ENCODE measurements at regions of chr19 and their contacts with region 1.

Region 1: GRCh38 chr19:40603389-40604135 is 2.4 kb downstream of the LTBP4 start:
- DNase-seq: peak; percentile 88
- ATAC-seq: peak; percentile 86
- H3K4me3 ChIP-seq: peak overlapping the region; percentile 56
- H3K27ac ChIP-seq: no peak overlapping the region
- H3K4me1 ChIP-seq: peaks cover 19% of the 10 kb centered on the region
- H3K27me3 ChIP-seq: peaks cover 8% of the 10 kb centered on the region in 2 experiments
- CTCF ChIP-seq: no peak
- EP300 ChIP-seq: no peak
- POLR2A ChIP-seq: peak; percentile 37; the same call in 1 of the 2 replicates
- RAD21 ChIP-seq: no peak

Region 2: GRCh38 chr19:40190891-40191835 is 412.4 kb before region 1 on chr19 and contains the start of gene MAP3K10:
- CTCF ChIA-PET with region 1: no interaction called
- POLR2A ChIA-PET with region 1: no interaction called
- RAD21 ChIA-PET with region 1: no interaction called
- SMC1A ChIA-PET with region 1: no interaction called
- in situ Hi-C with region 1: no loop called
- intact Hi-C with region 1: no loop called
- DNase-seq: peak; percentile 12
- ATAC-seq: peak; percentile 93
- H3K4me3 ChIP-seq: peak within 1 kb of the TSS; percentile 97
- H3K27ac ChIP-seq: peak within 1 kb of the TSS; percentile 89
- H3K4me1 ChIP-seq: peaks cover 10% of the 10 kb centered on the region
- H3K27me3 ChIP-seq: no peaks in the 10 kb centered on the region
- CTCF ChIP-seq: no peak
- EP300 ChIP-seq: no peak
- POLR2A ChIP-seq: peak; percentile 75
- RAD21 ChIP-seq: no peak
- polyA plus RNA-seq, gene MAP3K10: 0.11 to 0.16 TPM

Region 3: GRCh38 chr19:40570313-40571004 is 33.1 kb before region 1 on chr19:
- CTCF ChIA-PET with region 1: interaction called, 10 read pairs
- POLR2A ChIA-PET with region 1: interaction called, 6 read pairs
- RAD21 ChIA-PET with region 1: interaction called, 4 read pairs
- SMC1A ChIA-PET with region 1: interaction called, 3 read pairs
- in situ Hi-C with region 1: no loop called
- intact Hi-C with region 1: no loop called
- DNase-seq: peak; percentile 97
- ATAC-seq: peak; percentile 99
- H3K4me3 ChIP-seq: no peak overlapping the region; the same call in 1 of the 2 replicates
- H3K27ac ChIP-seq: no peak overlapping the region
- H3K4me1 ChIP-seq: peaks cover 4% of the 10 kb centered on the region
- H3K27me3 ChIP-seq: peaks cover 4 to 11% of the 10 kb centered on the region in 2 experiments; a peak in 3 of 4 replicates
- CTCF ChIP-seq: peak; percentile 43 to 52 (median 47); a peak in 5 of 6 replicates
- EP300 ChIP-seq: no peak
- POLR2A ChIP-seq: peak; percentile 47; the same call in 1 of the 2 replicates
- RAD21 ChIP-seq: peak; percentile 35; the same call in 1 of the 2 replicates